ENCODE measurements at regions of chr20 and their contacts with region 1.

Region 1: GRCh38 chr20:23050847-23051631 is 1.6 kb upstream of the THBD start:
- DNase-seq: peak; percentile 57
- H3K27ac ChIP-seq: peak overlapping the region; percentile 93
- CTCF ChIP-seq: peak; percentile 77

Region 2: DNA sequence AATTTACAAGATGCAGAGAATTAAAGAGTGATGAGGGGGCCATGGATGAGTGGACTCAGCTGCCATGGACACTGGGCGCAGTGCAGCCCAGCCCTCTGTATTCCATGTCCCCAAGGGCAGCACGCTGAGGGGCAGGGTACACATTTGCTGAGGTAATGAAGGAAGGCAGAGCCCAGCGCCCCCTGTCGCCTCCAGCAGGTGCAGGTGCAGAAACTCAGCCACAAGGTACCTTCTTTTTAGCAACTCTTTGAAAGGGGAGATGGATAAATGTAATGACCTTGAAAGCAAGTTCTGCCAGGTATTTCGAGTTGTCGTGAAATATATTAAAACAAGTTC is 27.9 kb after region 1 on chr20:
- CTCF ChIA-PET with region 1: no interaction called
- POLR2A ChIA-PET with region 1: no interaction called
- DNase-seq: no peak
- H3K27ac ChIP-seq: no peak overlapping the region
- CTCF ChIP-seq: no peak

Region 3: DNA sequence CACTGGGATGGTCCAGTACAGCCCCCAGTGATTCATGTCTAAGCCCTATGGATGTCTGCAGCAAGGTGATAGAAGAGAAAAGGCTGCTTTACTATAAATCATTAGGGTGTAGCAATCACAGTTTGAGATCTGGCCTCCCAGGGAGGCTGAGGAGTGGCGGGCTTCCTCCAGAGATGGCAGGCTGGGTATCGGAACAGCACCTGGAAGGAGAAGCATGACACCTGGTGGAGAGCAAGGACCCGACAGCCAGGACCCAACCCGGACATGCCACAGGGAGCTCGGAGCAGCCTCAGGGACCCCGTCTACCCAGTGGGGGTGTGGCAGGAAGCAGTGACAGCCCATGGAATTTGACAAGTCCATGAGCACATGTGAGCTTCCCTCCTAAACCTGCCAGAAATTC is 149.9 kb after region 1 on chr20:
- CTCF ChIA-PET with region 1: interaction called, 17 read pairs
- POLR2A ChIA-PET with region 1: no interaction called
- DNase-seq: peak; percentile 81
- H3K27ac ChIP-seq: no peak overlapping the region
- CTCF ChIP-seq: peak; percentile 61

Region 4: DNA sequence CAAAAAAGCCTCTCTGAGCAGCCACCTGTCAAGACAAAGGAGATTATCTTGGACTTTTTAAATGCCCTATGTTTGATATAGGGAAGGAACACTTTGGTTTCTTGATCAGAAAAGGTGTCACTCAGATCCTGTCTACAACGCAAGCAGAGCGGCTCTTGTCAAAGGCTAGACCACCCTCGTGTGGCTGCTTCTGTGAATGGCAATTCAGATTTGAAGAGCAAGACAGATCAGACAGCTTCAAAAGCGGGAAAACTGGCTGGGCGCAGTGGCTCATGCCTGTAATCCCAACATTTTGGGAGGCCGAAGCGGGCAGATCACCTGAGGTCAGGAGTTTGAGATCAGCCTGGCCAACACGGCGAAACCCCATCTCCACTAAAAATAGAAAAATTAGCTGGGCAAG is 289.5 kb after region 1 on chr20:
- CTCF ChIA-PET with region 1: interaction called, 17 read pairs
- POLR2A ChIA-PET with region 1: no interaction called
- DNase-seq: peak; percentile 79
- H3K27ac ChIP-seq: no peak overlapping the region
- CTCF ChIP-seq: peak; percentile 86